PC-3 (cell line): ENCODE measurements at regions of chr3 and their contacts with region 1.

Region 1: GRCh38 chr3:158727206-158728060 is 4.8 kb downstream of the RARRES1 start:
- DNase-seq: peak; percentile 84
- ATAC-seq: no peak
- H3K4me3 ChIP-seq: no peak overlapping the region
- H3K27ac ChIP-seq: peak overlapping the region; percentile 100
- H3K4me1 ChIP-seq: peaks cover 54% of the 10 kb centered on the region
- H3K27me3 ChIP-seq: no peaks in the 10 kb centered on the region
- CTCF ChIP-seq: peak; percentile 83

Region 2: GRCh38 chr3:158649791-158650190 is 77.6 kb before region 1 on chr3:
- CTCF ChIA-PET with region 1: no interaction called
- POLR2A ChIA-PET with region 1: interaction called, 14 read pairs
- intact Hi-C with region 1: no loop called
- DNase-seq: peak; percentile 37
- ATAC-seq: peak; percentile 51; the same call in 1 of the 2 replicates
- H3K4me3 ChIP-seq: no peak overlapping the region
- H3K27ac ChIP-seq: no peak overlapping the region
- H3K4me1 ChIP-seq: peaks cover 17% of the 10 kb centered on the region; the same call in 1 of the 2 replicates
- H3K27me3 ChIP-seq: no peaks in the 10 kb centered on the region
- CTCF ChIP-seq: no peak

Region 3: GRCh38 chr3:158672293-158673176 is 54.9 kb before region 1 on chr3 and contains the start of gene LXN:
- CTCF ChIA-PET with region 1: interaction called, 6 read pairs
- POLR2A ChIA-PET with region 1: interaction called, 7 read pairs
- intact Hi-C with region 1: loop called (anchors 1 kb)
- DNase-seq: peak; percentile 91
- ATAC-seq: peak; percentile 98
- H3K4me3 ChIP-seq: peak within 1 kb of the TSS; percentile 75
- H3K27ac ChIP-seq: peak within 1 kb of the TSS; percentile 94
- H3K4me1 ChIP-seq: peaks cover 8% of the 10 kb centered on the region
- H3K27me3 ChIP-seq: no peaks in the 10 kb centered on the region
- CTCF ChIP-seq: peak; percentile 73
- total RNA-seq, gene LXN: 332 and 471 TPM in 2 replicates

Region 4: GRCh38 chr3:158768361-158768787 is 40.9 kb after region 1 on chr3:
- CTCF ChIA-PET with region 1: no interaction called
- POLR2A ChIA-PET with region 1: interaction called, 12 read pairs
- intact Hi-C with region 1: no loop called
- DNase-seq: peak; percentile 65
- ATAC-seq: 0 out of 2 replicates have a peak, but pooled peaks have one; percentile 24
- H3K4me3 ChIP-seq: no peak overlapping the region
- H3K27ac ChIP-seq: peak overlapping the region; percentile 100
- H3K4me1 ChIP-seq: peaks cover 86% of the 10 kb centered on the region
- H3K27me3 ChIP-seq: no peaks in the 10 kb centered on the region
- CTCF ChIP-seq: no peak